CD14-positive monocyte (primary cell): ENCODE measurements at regions of chr15 and their contacts with region 1.

Region 1: DNA sequence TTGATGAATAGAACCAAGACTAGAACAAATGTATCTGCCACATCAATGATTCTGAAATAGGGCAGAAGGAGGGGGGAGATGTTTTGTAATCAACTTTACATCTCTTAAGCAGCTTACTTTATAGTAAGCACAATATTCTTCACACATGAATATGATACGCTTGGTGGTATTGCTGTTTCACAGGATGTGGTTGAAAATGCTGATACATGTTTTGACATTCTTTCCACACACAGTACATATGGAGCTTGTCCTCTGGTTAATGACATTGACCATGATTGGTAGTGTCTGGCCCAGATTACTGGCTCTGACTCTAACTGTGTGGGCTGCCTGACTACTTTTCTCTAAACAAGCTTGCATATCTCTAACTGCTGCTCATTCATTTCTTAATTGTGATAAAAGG is 168.9 kb downstream of the KLHL25 start:
- DNase-seq: peak in 1 of 3 donors; percentile 23
- H3K4me3 ChIP-seq: no peak overlapping the region
- H3K4me3 Mint-ChIP-seq: no peak overlapping the region
- H3K27ac ChIP-seq: peak overlapping the region in 1 of 2 donors; percentile 76
- H3K27ac Mint-ChIP-seq: peak overlapping the region; percentile 11 to 93 (median 64)
- H3K4me1 ChIP-seq: peaks cover 74 to 80% of the 10 kb centered on the region in 2 donors
- H3K4me1 Mint-ChIP-seq: peaks cover 88% of the 10 kb centered on the region
- H3K27me3 ChIP-seq: no peaks in the 10 kb centered on the region
- H3K27me3 Mint-ChIP-seq: no peaks in the 10 kb centered on the region
- CTCF ChIP-seq: no peak

Region 2: GRCh38 chr15:85296615-85297402 is 329.0 kb before region 1 on chr15:
- intact Hi-C with region 1: no loop called
- DNase-seq: peak; percentile 38 to 63 (median 61)
- H3K4me3 ChIP-seq: no peak overlapping the region
- H3K4me3 Mint-ChIP-seq: peak overlapping the region; percentile 50 to 79
- H3K27ac ChIP-seq: no peak overlapping the region
- H3K27ac Mint-ChIP-seq: peak overlapping the region in 2 of 7 donors; percentile 30 to 81
- H3K4me1 ChIP-seq: peaks cover 4 to 9% of the 10 kb centered on the region in 2 donors
- H3K4me1 Mint-ChIP-seq: peaks cover 14% of the 10 kb centered on the region
- H3K27me3 ChIP-seq: no peaks in the 10 kb centered on the region
- H3K27me3 Mint-ChIP-seq: peaks cover 0 to 2% (median 0%) of the 10 kb centered on the region in 3 donors
- CTCF ChIP-seq: peak; percentile 59

Region 3: DNA sequence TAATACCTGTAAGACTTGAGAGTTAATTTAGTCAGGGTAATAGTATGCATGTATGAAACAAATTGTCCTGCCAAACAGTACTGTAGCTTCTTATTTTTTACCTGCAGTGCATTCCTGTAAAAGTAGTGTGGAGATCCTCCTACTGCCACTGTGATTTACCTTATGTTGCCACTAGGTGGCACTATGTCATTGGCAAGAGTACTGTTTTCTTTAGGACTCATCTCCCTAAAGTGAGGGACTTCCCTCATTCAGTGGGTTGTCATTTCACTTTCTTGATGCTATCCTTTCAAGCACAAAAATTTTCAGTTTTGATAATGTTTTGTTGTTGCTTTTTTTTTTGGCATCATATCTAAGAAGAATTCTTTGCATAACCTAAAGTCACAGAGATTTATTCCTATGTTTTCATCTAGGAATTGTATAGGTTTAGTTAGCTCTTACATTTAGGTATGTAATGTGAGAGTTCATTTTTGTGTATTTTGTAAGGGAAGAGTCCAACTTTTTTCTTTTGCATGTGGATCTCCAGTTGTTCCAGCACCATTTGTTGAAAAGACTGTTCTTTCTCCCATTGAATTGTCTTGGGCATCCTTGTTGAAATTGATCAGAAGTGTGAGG is 139.8 kb before region 1 on chr15:
- intact Hi-C with region 1: loop called in 1 of 2 experiments (anchors 10 kb)
- DNase-seq: peak; percentile 59 to 86 (median 78)
- H3K4me3 ChIP-seq: no peak overlapping the region
- H3K4me3 Mint-ChIP-seq: no peak overlapping the region
- H3K27ac ChIP-seq: no peak overlapping the region
- H3K27ac Mint-ChIP-seq: peak overlapping the region in 1 of 7 donors; percentile 75
- H3K4me1 ChIP-seq: peaks cover 21 to 29% of the 10 kb centered on the region in 2 donors
- H3K4me1 Mint-ChIP-seq: peaks cover 53% of the 10 kb centered on the region
- H3K27me3 ChIP-seq: no peaks in the 10 kb centered on the region
- H3K27me3 Mint-ChIP-seq: peaks cover 0 to 3% (median 0%) of the 10 kb centered on the region in 3 donors
- CTCF ChIP-seq: peak; percentile 91